HepG2 (cell line): ENCODE measurements at regions of chr9 and their contacts with region 1.

Region 1: GRCh38 chr9:84947363-84947972 is 277.9 kb downstream of the NTRK2 start:
- DNase-seq: no peak
- ATAC-seq: no peak
- H3K4me3 ChIP-seq: no peak overlapping the region
- H3K27ac ChIP-seq: no peak overlapping the region
- H3K4me1 ChIP-seq: no peaks in the 10 kb centered on the region
- H3K27me3 ChIP-seq: no peaks in the 10 kb centered on the region
- CTCF ChIP-seq: no peak
- EP300 ChIP-seq: no peak
- POLR2A ChIP-seq: no peak
- RAD21 ChIP-seq: no peak

Region 2: GRCh38 chr9:84880835-84881234 is 66.6 kb before region 1 on chr9:
- CTCF ChIA-PET with region 1: no interaction called
- POLR2A ChIA-PET with region 1: no interaction called
- in situ Hi-C with region 1: loop called (anchors 10 kb)
- intact Hi-C with region 1: no loop called
- DNase-seq: no peak
- ATAC-seq: no peak
- H3K4me3 ChIP-seq: no peak overlapping the region
- H3K27ac ChIP-seq: no peak overlapping the region
- H3K4me1 ChIP-seq: no peaks in the 10 kb centered on the region
- H3K27me3 ChIP-seq: no peaks in the 10 kb centered on the region
- CTCF ChIP-seq: no peak
- EP300 ChIP-seq: no peak
- POLR2A ChIP-seq: no peak
- RAD21 ChIP-seq: no peak